Aorta (tissue), 5 donors: ENCODE measurements at regions of chr6 and their contacts with region 1.

Region 1: DNA sequence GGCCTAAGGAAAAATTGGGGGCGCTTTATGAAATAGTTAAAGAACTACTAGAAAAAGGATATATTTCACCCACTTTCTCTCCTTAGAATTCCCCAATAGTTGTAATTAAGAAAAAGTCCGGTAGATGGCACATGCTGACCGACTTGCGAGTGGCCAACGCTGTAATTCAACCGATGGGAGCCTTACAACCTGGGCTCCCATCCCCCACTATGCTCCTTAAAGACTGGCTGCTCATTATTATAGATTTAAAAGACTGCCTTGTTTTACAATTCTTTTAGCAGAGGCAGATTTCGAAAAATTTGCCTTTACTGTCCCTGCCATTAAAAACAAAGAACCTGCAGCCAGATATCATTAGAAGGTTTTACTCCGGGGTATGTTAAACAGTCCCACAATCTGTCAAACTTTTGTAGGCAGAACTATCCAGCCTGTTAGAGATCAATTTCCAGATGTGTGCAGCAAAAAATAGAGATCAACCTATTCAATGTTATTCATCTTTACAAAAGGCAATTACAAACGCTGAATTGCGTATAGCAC is 58.5 kb upstream of the PRSS16 start:
- DNase-seq: peak in 1 of 2 donors; percentile 62
- ATAC-seq: peak; percentile 94
- H3K4me3 ChIP-seq: peak overlapping the region; percentile 75 to 77
- H3K27ac ChIP-seq: peak overlapping the region in 1 of 2 donors; percentile 7
- H3K4me1 ChIP-seq: no peaks in the 10 kb centered on the region
- H3K27me3 ChIP-seq: no peaks in the 10 kb centered on the region

Region 2: DNA sequence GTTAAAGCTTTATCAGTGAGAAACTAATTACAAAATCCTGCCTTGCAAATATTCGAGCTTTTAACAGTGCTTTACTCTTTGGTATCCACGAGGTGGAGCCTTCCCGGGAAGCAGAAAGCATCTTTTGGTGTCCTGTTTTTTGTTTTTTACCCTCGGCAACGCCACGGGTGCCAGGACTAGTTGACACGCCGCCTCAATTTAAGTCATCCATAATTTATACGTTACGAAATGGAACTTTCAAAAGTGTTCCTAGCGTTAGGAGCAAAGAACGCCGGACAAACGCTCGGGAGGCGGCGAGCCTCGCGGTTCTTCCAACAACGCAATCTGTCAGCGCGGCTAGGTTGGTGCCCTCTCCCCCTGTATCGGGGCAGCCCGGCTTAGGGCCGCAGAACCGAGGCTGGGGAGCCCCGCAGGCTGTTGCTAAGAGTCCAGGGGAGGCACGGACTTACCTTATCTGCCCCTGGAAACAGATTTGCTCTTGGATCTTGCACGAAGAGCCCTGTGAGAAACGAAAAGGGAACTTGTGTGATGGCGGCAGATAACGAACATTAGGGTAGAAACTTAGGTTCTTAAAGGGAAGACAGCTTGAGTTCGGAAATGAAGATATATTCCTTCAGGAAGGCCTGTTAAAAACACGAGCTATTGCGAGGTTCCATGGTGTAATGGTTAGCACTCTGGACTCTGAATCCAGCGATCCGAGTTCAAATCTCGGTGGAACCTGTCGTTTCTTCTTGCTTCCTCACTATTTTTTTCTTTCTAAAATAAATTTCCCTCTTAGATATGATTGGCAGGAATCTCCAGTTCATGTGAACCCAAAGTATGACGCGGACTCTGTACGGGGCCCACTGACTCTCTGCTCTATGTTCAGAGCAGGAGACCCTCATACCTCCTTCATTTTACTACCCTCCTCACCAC is 330.2 kb after region 1 on chr6:
- intact Hi-C with region 1: loop called in 1 of 2 experiments (anchors 10 kb)
- DNase-seq: peak; percentile 60 to 84
- ATAC-seq: peak; percentile 95
- H3K4me3 ChIP-seq: peak overlapping the region; percentile 69 to 94
- H3K27ac ChIP-seq: peak overlapping the region; percentile 85 to 93
- H3K4me1 ChIP-seq: no peaks in the 10 kb centered on the region
- H3K27me3 ChIP-seq: no peaks in the 10 kb centered on the region